Posterior vena cava (tissue), 2 donors: ENCODE measurements at regions of chr21 and their contacts with region 1.

Region 1: GRCh38 chr21:34889716-34890469 is 159.2 kb downstream of the RUNX1 start:
- DNase-seq: peak; percentile 95

Region 2: DNA sequence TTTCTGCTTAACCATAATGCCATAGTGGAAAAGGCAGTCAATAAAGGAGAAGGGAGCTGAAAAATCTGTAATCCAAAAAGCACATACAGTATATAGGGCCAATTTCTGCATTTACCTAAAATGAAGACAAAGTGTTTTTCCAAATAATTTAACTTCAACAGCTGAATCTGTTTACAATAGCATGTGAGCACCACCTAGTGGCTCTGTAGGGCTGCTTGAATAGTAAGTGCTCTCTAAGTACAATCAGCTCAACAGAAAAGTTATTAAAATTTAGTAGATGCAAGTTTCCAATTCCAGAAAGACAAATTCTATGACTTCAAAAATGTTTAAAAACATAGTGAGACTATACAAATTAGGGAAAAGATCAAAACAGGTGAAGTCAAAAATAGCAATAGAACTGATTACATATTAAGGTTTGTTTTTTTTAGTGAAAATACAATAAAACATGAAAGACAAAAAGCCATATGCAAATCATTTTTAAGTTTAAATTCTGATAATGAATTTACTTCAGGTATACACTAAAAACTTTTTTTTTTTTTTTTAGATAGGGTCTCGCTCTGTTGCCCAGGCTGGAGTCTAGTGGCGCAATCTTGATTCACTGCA is 950.4 kb after region 1 on chr21:
- intact Hi-C with region 1: loop called in 1 of 2 experiments (anchors 10 kb)
- DNase-seq: no peak